Activated T-helper 1 cell treated with anti-CD3 and anti-CD28 coated beads, Interleukin-12 subunit alpha, Interleukin-12 subunit beta, Interleukin-2, Interleukin-4 antibody, amounts not matched to agents 30 ng/mL and 10 ng/mL and 1 ng/mL, durations not matched to agents 14 hours and 24 hours and 36 hours (primary cell): ENCODE measurements at regions of chr1 and their contacts with region 1.

Region 1: GRCh38 chr1:201023517-201023902 is at the start of gene KIF21B:
- DNase-seq: peak; percentile 92
- H3K4me3 Mint-ChIP-seq: peak within 1 kb of the TSS; percentile 100
- H3K27ac Mint-ChIP-seq: peak within 1 kb of the TSS; percentile 99
- H3K4me1 Mint-ChIP-seq: peaks cover 79% of the 10 kb centered on the region
- H3K27me3 Mint-ChIP-seq: no peaks in the 10 kb centered on the region
- total RNA-seq, gene KIF21B: 50.4 and 52.0 TPM in 2 replicates

Region 2: DNA sequence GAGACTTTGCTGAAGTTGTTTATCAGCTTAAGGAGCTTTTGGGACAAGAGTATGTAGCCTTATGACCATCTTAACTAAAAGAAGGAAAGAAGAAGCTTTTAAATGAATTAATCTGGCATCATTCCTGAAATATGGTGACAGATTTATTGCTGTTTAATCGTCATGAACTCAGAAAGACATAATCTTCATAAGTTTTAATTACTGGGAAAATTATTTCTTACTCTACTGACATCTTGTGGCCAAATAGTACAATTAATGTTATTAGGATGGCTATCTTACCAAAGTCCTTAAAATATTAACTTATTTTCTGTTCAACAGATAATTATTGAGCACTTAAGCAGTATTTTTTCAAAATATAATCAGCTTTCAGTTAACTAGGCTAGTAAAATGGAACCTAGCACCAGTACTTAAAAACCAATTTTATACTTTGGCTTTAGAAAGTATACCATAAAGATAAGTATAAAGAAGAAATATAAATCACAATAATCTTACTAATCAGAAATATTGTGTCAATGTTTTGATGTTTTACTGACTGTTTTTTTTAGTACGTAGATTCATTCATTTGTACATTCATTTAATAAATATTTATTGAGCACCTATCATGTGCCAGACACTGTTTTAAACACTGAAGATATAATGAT is 185.5 kb before region 1 on chr1:
- intact Hi-C with region 1: no loop called
- DNase-seq: no peak
- H3K4me3 Mint-ChIP-seq: no peak overlapping the region
- H3K27ac Mint-ChIP-seq: no peak overlapping the region
- H3K4me1 Mint-ChIP-seq: no peaks in the 10 kb centered on the region
- H3K27me3 Mint-ChIP-seq: no peaks in the 10 kb centered on the region

Region 3: DNA sequence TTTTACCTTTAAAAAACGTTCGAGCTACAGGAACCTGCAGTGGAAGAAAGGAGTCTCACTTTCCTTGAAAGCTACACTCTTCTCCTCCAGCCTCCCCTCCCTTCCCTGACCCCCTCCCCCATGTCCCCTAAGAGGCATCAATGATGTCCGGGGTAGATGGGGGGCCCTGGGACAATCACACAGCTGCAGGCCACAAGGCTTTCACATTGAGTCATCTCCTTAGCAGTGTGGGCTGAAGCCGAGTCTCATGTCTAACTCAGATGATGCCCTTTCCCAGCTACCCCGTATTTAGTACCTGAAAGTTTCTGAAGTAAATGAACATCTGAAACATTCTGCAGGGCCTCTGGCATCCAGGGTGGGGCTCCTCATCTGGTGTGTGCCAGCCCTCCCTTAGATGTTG is 157.0 kb before region 1 on chr1:
- intact Hi-C with region 1: loop called (anchors 1 kb)
- DNase-seq: no peak
- H3K4me3 Mint-ChIP-seq: no peak overlapping the region
- H3K27ac Mint-ChIP-seq: no peak overlapping the region
- H3K4me1 Mint-ChIP-seq: peaks cover 41% of the 10 kb centered on the region
- H3K27me3 Mint-ChIP-seq: peaks cover 37% of the 10 kb centered on the region

Region 4: DNA sequence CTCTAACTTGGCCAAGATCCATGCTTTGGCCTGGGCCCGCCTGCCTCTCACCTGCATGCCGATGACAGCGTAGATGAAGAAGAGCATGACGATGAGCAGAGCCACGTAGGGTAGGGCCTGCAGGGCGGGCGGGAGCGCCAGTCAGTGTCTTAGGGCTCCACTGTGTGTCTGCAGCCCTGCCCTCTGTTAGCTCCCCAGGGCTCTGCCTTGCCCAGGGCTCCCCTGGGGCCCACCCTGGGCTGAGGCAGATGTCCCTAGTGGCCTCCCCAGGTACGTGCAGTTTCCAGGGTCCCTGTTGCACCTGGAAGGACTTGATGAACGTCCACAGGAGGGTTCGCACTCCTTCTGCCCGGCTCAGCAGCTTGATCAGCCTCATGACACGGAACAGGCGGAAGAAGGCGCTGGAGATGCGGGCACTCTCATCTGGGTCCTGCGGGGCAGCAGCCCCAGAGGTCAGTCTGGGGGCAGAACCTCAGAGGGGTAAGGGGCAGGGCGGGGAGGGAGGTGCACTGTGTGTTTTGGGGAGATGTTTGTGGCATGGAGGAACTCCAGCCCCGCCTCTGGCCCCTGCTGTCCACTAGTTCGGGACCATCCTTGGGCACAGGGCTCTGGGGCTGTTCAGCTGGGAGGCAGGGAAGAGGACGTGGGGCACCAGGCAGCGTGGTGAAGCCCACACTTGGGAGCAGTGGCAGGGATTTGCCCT is 29.8 kb after region 1 on chr1:
- intact Hi-C with region 1: loop called (anchors 5 kb)
- DNase-seq: no peak
- H3K4me3 Mint-ChIP-seq: no peak overlapping the region
- H3K27ac Mint-ChIP-seq: no peak overlapping the region
- H3K4me1 Mint-ChIP-seq: peaks cover 25% of the 10 kb centered on the region
- H3K27me3 Mint-ChIP-seq: peaks cover 3% of the 10 kb centered on the region

Region 5: DNA sequence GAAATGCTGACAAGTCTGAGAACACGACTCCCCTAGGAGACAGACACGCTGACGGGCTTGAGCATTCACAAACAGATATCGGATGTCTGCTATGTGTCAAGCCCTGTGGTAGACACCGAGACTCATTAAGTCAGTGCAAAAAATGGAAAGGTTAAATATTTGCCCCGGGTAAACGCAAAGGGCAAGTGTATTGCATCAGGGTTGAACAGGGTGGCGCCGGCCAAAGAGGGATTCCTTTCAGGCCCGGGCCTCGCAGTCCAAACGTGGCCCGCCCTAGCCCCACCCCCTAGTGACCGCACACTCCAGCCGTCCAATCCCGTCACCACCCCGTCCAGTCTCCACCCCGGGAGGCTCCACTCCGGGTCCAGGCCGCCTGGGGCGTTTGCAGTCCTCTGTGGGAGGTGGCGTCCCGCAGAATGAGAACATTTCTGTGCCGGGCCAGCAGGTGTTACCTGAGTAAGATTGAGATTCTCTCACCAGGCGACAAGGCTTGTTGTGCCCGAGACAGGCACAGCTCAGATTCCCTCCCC is 147.1 kb after region 1 on chr1:
- intact Hi-C with region 1: loop called (anchors 1 kb)
- DNase-seq: peak; percentile 65
- H3K4me3 Mint-ChIP-seq: peak overlapping the region; percentile 76
- H3K27ac Mint-ChIP-seq: peak overlapping the region; percentile 65
- H3K4me1 Mint-ChIP-seq: peaks cover 6% of the 10 kb centered on the region
- H3K27me3 Mint-ChIP-seq: peaks cover 21% of the 10 kb centered on the region

Region 6: GRCh38 chr1:202160377-202160940 is 1136.9 kb after region 1 on chr1 and contains the start of gene PTPN7:
- intact Hi-C with region 1: loop called (anchors 10 kb)
- DNase-seq: peak; percentile 59
- H3K4me3 Mint-ChIP-seq: peak within 1 kb of the TSS; percentile 98
- H3K27ac Mint-ChIP-seq: peak within 1 kb of the TSS; percentile 94
- H3K4me1 Mint-ChIP-seq: peaks cover 77% of the 10 kb centered on the region
- H3K27me3 Mint-ChIP-seq: no peaks in the 10 kb centered on the region
- total RNA-seq, gene PTPN7: 584 and 597 TPM in 2 replicates